ENCODE measurements at regions of chr7 and their contacts with region 1.

Region 1: GRCh38 chr7:49852619-49853462 is 79.4 kb downstream of the VWC2 start:
- DNase-seq: peak; percentile 39
- ATAC-seq: peak; percentile 88
- H3K4me3 ChIP-seq: no peak overlapping the region
- H3K27ac ChIP-seq: no peak overlapping the region
- H3K4me1 ChIP-seq: no peaks in the 10 kb centered on the region
- H3K27me3 ChIP-seq: no peaks in the 10 kb centered on the region; a peak in 1 of 5 replicates
- CTCF ChIP-seq: peak; percentile 87
- EP300 ChIP-seq: no peak
- POLR2A ChIP-seq: no peak
- RAD21 ChIP-seq: peak; percentile 55

Region 2: DNA sequence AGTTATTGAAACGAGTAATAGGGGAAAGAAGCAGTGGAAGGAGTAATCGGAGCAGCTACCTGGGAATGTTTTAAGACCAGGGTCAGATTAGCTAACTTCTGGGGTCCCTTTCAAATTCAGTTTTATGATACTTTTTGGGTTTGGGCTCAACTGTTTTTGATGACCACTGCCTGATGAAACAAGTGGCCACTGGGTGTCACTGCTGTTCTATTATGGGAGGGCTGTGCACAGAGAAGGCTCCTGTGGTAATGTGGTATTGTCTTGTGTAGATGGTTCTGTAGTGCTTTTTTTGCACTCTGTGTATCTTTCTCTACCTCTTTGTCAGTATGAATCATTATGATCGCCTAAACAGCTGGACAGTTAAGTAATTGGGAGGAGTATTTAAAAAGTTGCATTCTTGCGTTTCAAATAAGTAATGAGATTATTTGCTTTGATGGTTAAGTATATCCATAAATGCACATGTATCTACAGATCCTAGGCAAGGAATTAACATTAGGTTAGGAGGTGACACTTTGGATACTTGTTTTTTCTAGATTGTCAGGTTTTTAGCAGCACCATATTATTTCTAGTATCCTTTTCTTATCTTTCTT is 1553.2 kb before region 1 on chr7:
- CTCF ChIA-PET with region 1: interaction called, 6 read pairs
- POLR2A ChIA-PET with region 1: no interaction called
- in situ Hi-C with region 1: loop called (anchors 25 kb)
- intact Hi-C with region 1: no loop called
- DNase-seq: peak; percentile 47
- ATAC-seq: peak; percentile 98
- H3K4me3 ChIP-seq: no peak overlapping the region
- H3K27ac ChIP-seq: no peak overlapping the region
- H3K4me1 ChIP-seq: no peaks in the 10 kb centered on the region
- H3K27me3 ChIP-seq: no peaks in the 10 kb centered on the region
- CTCF ChIP-seq: peak; percentile 79
- EP300 ChIP-seq: no peak
- POLR2A ChIP-seq: no peak
- RAD21 ChIP-seq: peak; percentile 38; the same call in 1 of the 2 replicates

Measured in HepG2 (cell line).